ENCODE measurements at regions of chr10 and their contacts with region 1.

Region 1: DNA sequence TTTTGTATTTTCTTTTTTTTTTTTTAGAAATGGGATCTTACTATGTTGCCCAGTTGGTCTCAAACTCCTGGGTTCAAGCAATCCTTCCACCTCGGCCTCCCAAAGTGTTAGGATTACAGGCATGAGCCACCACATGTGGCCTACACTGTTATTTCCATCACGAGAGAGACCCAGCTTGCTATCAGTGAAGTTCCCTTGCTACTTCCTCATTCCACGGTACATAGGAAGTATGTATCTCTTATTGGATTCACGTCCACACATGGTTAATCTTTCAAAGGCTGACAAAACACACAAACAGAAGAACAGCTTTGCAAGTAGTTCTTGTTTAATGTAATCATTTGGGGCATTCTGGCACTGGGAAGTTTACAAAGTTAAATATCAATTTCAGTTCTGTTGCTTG is 50.9 kb downstream of the DCLRE1A start:
- DNase-seq: no peak
- H3K4me3 ChIP-seq: no peak overlapping the region
- H3K27ac ChIP-seq: no peak overlapping the region
- H3K4me1 ChIP-seq: no peaks in the 10 kb centered on the region
- H3K27me3 ChIP-seq: peaks cover 7% of the 10 kb centered on the region; the same call in 1 of the 2 replicates
- CTCF ChIP-seq: no peak
- EP300 ChIP-seq: no peak
- RAD21 ChIP-seq: no peak

Region 2: DNA sequence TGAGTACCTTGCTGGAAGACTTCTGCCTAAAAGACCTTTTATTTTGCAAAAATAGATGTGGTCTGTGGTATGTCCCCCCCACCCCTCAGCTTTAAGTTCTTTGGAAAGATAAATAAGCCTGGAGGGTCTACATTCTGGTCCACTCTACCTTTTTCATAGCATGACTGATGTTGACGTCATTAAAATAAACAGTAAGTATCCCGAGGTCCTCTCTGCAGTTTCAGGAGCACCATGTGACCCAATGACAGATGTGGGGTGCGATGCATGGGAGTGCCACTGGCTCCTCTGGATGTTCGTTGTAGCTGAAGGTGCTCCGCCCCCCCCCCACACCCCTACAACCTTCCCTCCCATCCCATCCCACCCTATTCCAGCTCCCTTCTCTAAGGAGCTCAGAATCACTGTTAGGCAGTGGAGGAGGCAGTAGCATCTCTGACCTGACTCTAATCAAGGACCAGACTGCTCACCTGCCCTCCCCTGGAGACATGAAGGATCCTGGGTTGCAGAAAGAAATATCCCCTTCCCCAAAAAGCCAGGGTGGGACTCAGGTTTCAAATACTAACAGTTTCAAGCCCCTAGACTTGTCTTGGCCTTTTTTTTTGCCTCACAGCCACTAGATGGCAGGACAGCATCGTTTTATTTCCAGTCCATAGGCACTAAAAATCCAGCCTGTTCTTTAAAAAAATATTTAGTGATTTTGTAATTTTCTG is 98.2 kb before region 1 on chr10:
- CTCF ChIA-PET with region 1: interaction called, 10 read pairs
- POLR2A ChIA-PET with region 1: no interaction called
- DNase-seq: peak; percentile 46
- H3K4me3 ChIP-seq: peak overlapping the region in 1 of 2 experiments; percentile 30; a peak in 1 of 4 replicates
- H3K27ac ChIP-seq: no peak overlapping the region
- H3K4me1 ChIP-seq: peaks cover 0 to 22% of the 10 kb centered on the region in 2 experiments; a peak in 2 of 4 replicates
- H3K27me3 ChIP-seq: no peaks in the 10 kb centered on the region
- CTCF ChIP-seq: peak; percentile 85
- EP300 ChIP-seq: no peak
- RAD21 ChIP-seq: peak; percentile 76

Region 3: GRCh38 chr10:114110174-114110972 is 307.4 kb after region 1 on chr10:
- CTCF ChIA-PET with region 1: interaction called, 13 read pairs
- POLR2A ChIA-PET with region 1: no interaction called
- DNase-seq: no peak
- H3K4me3 ChIP-seq: no peak overlapping the region
- H3K27ac ChIP-seq: no peak overlapping the region
- H3K4me1 ChIP-seq: no peaks in the 10 kb centered on the region
- H3K27me3 ChIP-seq: no peaks in the 10 kb centered on the region; the same call in 1 of the 2 replicates
- CTCF ChIP-seq: peak; percentile 33
- EP300 ChIP-seq: no peak
- RAD21 ChIP-seq: peak; percentile 21

Measured in SK-N-SH (cell line).